HCT116 (cell line): ENCODE measurements at regions of chr20 and their contacts with region 1.

Region 1: GRCh38 chr20:7935027-7935551 is 5.2 kb downstream of the HAO1 start:
- DNase-seq: no peak
- ATAC-seq: no peak
- H3K4me3 ChIP-seq: no peak overlapping the region
- H3K27ac ChIP-seq: no peak overlapping the region
- H3K4me1 ChIP-seq: peaks cover 0 to 4% of the 10 kb centered on the region in 2 experiments; a peak in 1 of 4 replicates
- H3K27me3 ChIP-seq: no peaks in the 10 kb centered on the region
- CTCF ChIP-seq: no peak
- POLR2A ChIP-seq: no peak
- RAD21 ChIP-seq: no peak

Region 2: GRCh38 chr20:7893014-7893707 is 41.9 kb before region 1 on chr20:
- CTCF ChIA-PET with region 1: no interaction called
- POLR2A ChIA-PET with region 1: no interaction called
- RAD21 ChIA-PET with region 1: no interaction called
- intact Hi-C with region 1: no loop called
- DNase-seq: no peak
- ATAC-seq: no peak
- H3K4me3 ChIP-seq: no peak overlapping the region
- H3K27ac ChIP-seq: no peak overlapping the region
- H3K4me1 ChIP-seq: no peaks in the 10 kb centered on the region
- H3K27me3 ChIP-seq: no peaks in the 10 kb centered on the region
- CTCF ChIP-seq: no peak
- POLR2A ChIP-seq: no peak
- RAD21 ChIP-seq: no peak

Region 3: GRCh38 chr20:7980332-7981046 is 45.4 kb after region 1 on chr20:
- CTCF ChIA-PET with region 1: interaction called, 12 read pairs
- POLR2A ChIA-PET with region 1: no interaction called
- RAD21 ChIA-PET with region 1: no interaction called
- intact Hi-C with region 1: no loop called
- DNase-seq: peak; percentile 23
- ATAC-seq: peak; percentile 91
- H3K4me3 ChIP-seq: no peak overlapping the region
- H3K27ac ChIP-seq: no peak overlapping the region
- H3K4me1 ChIP-seq: peaks cover 0 to 5% of the 10 kb centered on the region in 2 experiments; a peak in 1 of 4 replicates
- H3K27me3 ChIP-seq: no peaks in the 10 kb centered on the region
- CTCF ChIP-seq: peak; percentile 26 to 69 (median 59); a peak in 4 of 6 replicates
- POLR2A ChIP-seq: no peak
- RAD21 ChIP-seq: peak; percentile 50

Region 4: DNA sequence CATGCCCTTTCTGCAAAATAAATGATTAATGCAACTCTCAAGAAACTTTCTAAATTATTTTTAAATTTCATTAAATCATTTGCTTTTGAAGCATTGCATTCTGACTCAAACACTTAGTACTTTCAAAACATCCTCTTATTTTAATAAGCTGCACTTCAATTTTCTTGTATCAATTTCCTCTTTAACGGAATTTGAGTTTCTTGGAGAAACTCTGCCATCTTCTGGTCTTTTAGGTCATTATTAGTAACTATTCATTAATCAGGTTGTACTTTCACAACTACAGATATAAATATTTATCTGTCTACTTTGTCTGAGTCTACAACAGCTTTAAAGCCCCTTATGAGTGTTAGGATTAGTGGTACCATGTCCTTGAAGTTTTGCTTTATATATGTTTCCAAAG is 54.3 kb after region 1 on chr20:
- CTCF ChIA-PET with region 1: interaction called, 22 read pairs
- POLR2A ChIA-PET with region 1: no interaction called
- RAD21 ChIA-PET with region 1: interaction called in 1 of 2 experiments, 4 read pairs
- intact Hi-C with region 1: no loop called
- DNase-seq: no peak
- ATAC-seq: no peak
- H3K4me3 ChIP-seq: no peak overlapping the region
- H3K27ac ChIP-seq: no peak overlapping the region
- H3K4me1 ChIP-seq: no peaks in the 10 kb centered on the region
- H3K27me3 ChIP-seq: no peaks in the 10 kb centered on the region
- CTCF ChIP-seq: peak in 2 of 3 experiments; percentile 20 to 24; a peak in 3 of 6 replicates
- POLR2A ChIP-seq: no peak
- RAD21 ChIP-seq: peak; percentile 30; the same call in 1 of the 2 replicates